ENCODE measurements at regions of chr17 and their contacts with region 1.

Region 1: DNA sequence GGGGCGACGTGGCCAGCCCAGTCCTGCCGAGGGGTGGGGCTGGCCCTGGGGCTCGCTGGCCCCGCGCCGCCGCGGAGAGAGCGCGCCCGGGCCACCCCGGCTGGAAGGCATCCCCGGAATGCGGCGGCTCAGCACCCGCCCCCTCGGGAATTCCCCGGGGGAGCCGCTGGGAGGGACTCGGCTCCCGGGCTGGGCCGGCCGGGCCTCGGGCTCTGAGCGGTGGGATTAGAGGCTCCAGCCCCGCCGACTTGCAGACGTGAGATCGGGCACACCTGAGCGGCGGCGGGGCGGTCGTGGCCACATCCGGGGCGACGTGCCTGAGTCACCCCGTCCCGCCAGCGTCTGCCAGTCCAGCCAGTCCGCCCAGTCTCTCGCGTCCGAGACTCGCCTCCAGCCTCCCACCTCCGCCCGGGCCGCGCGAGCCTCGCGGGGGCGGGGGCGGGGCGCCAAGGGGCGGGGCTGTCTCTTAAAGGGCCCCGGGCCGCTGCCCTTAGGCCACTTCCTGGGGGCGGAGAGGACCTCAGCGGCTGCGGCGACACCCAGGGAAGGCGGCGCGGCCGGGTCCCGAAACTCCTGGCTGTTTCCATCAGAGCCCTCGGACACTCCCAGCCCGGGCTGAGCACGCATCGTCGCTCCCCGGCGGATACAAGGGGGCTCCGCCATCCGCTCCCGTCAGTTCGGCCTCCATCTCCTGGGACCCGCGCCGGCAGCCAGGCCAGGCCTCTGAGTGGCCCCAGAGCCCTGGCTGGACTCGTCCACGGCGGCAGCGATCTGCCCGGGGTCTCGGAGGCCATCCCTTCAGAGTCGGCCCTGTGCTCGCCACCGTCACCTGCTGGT is at the start of gene KCTD11:
- DNase-seq: peak; percentile 94
- H3K4me3 ChIP-seq: peak within 1 kb of the TSS; percentile 79
- H3K27ac ChIP-seq: peak within 1 kb of the TSS; percentile 99
- H3K4me1 ChIP-seq: peaks cover 14% of the 10 kb centered on the region
- H3K27me3 ChIP-seq: no peaks in the 10 kb centered on the region
- CTCF ChIP-seq: no peak
- total RNA-seq, gene KCTD11: 5.6 to 12.6 TPM

Region 2: GRCh38 chr17:7045909-7046724 is 305.8 kb before region 1 on chr17:
- intact Hi-C with region 1: loop called (anchors 5 kb)
- DNase-seq: peak; percentile 95
- H3K4me3 ChIP-seq: peak overlapping the region; percentile 21
- H3K27ac ChIP-seq: peak overlapping the region; percentile 71
- H3K4me1 ChIP-seq: peaks cover 18% of the 10 kb centered on the region
- H3K27me3 ChIP-seq: peaks cover 7% of the 10 kb centered on the region
- CTCF ChIP-seq: peak; percentile 64

Region 3: GRCh38 chr17:7435221-7435675 is 83.4 kb after region 1 on chr17 and contains the start of gene TMEM102:
- intact Hi-C with region 1: loop called (anchors 5 kb)
- DNase-seq: peak; percentile 99
- H3K4me3 ChIP-seq: peak within 1 kb of the TSS; percentile 69
- H3K27ac ChIP-seq: peak within 1 kb of the TSS; percentile 91
- H3K4me1 ChIP-seq: peaks cover 18% of the 10 kb centered on the region
- H3K27me3 ChIP-seq: peaks cover 24% of the 10 kb centered on the region
- CTCF ChIP-seq: no peak
- total RNA-seq, gene TMEM102: 20.4 to 20.6 TPM

Region 4: DNA sequence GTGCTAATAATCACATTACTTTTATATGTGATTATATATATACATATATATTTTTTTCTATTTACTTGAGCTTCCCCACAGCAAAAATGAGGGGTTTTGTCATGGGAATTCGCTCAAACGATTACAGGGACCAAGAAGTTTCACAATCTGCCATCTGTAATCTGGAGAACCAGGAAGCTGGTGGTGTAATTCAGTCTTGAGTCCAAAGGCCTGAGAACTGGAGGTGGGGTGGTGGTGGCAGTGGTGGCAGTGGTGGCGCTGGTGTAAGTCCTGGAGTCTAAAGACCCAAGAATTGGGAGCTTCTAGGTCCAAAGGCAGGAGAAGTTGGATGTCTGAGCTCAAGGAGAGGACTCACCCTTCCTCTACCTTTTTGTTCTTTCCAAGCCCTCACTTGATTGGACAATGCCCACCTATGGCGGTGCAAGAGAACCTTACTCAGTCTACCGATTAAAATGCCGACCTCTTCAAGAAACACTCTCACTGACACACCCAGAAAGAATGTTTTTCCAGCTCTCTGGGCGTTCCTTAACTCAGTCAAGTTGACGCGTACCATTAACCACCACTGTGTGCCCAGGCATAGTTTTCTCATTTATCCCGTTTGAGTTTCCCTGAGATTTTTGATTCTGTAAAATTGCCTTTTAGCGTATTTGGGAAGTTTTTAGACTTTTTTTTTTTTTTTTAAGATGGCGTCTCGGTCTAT is 164.2 kb after region 1 on chr17:
- intact Hi-C with region 1: loop called (anchors 10 kb)
- DNase-seq: peak; percentile 74
- H3K4me3 ChIP-seq: no peak overlapping the region
- H3K27ac ChIP-seq: peak overlapping the region; percentile 53
- H3K4me1 ChIP-seq: peaks cover 6% of the 10 kb centered on the region
- H3K27me3 ChIP-seq: no peaks in the 10 kb centered on the region
- CTCF ChIP-seq: no peak

Region 5: DNA sequence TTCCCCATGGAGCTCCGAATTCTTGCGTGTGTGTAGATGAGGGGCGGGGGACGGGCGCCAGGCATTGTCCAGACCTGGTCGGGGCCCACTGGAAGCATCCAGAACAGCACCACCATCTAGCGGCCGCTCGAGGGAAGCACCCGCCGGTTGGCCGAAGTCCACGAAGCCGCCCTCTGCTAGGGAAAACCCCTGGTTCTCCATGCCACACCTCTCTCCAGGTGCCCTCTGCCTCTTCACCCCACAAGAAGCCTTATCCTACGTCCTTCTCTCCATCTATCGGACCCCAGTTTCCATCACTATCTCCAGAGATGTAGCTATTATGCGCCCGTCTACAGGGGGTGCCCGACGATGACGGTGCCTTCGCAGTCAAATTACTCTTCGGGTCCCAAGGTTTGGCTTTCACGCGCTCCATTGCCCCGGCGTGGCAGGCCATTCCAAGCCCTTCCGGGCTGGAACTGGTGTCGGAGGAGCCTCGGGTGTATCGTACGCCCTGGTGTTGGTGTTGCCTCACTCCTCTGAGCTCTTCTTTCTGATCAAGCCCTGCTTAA is 209.2 kb after region 1 on chr17:
- intact Hi-C with region 1: loop called (anchors 10 kb)
- DNase-seq: peak; percentile 97
- H3K4me3 ChIP-seq: peak overlapping the region; percentile 95
- H3K27ac ChIP-seq: peak overlapping the region; percentile 95
- H3K4me1 ChIP-seq: peaks cover 25% of the 10 kb centered on the region
- H3K27me3 ChIP-seq: no peaks in the 10 kb centered on the region
- CTCF ChIP-seq: peak; percentile 79

Measured in colonic mucosa (tissue), 4 donors.